MCF 10A (cell line): ENCODE measurements at regions of chr3 and their contacts with region 1.

Region 1: DNA sequence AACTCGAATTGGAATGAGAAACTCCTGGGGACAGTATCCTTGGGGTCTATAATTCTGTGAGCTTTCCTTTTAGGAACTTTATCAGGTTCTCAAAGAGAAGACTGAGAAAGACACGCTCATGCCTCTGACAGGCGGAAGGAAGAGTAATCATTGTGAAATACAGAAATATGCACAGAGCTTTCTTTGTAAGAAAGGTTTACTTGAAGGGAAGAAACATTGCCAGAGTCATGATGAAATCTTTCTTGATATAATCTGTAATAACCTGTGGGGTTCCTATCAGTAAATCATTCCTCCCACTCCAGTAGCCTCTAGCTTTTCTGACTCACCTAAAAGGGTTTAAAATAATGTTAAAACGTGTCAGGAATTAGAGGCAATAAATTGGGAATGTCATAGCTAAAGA is 83.6 kb upstream of the CCDC39 start:
- DNase-seq: peak; percentile 53
- H3K4me3 Mint-ChIP-seq: peak overlapping the region; percentile 60
- H3K27ac Mint-ChIP-seq: peak overlapping the region; percentile 65
- H3K4me1 Mint-ChIP-seq: peaks cover 16% of the 10 kb centered on the region
- H3K27me3 Mint-ChIP-seq: no peaks in the 10 kb centered on the region
- CTCF ChIP-seq: no peak

Region 2: GRCh38 chr3:180700941-180701340 is 61.9 kb before region 1 on chr3:
- CTCF ChIA-PET with region 1: interaction called, 9 read pairs
- POLR2A ChIA-PET with region 1: interaction called, 21 read pairs
- intact Hi-C with region 1: loop called (anchors 5 kb)
- DNase-seq: peak; percentile 61
- H3K4me3 Mint-ChIP-seq: peak overlapping the region; percentile 15
- H3K27ac Mint-ChIP-seq: peak overlapping the region; percentile 80
- H3K4me1 Mint-ChIP-seq: peaks cover 37% of the 10 kb centered on the region
- H3K27me3 Mint-ChIP-seq: no peaks in the 10 kb centered on the region
- CTCF ChIP-seq: no peak

Region 3: DNA sequence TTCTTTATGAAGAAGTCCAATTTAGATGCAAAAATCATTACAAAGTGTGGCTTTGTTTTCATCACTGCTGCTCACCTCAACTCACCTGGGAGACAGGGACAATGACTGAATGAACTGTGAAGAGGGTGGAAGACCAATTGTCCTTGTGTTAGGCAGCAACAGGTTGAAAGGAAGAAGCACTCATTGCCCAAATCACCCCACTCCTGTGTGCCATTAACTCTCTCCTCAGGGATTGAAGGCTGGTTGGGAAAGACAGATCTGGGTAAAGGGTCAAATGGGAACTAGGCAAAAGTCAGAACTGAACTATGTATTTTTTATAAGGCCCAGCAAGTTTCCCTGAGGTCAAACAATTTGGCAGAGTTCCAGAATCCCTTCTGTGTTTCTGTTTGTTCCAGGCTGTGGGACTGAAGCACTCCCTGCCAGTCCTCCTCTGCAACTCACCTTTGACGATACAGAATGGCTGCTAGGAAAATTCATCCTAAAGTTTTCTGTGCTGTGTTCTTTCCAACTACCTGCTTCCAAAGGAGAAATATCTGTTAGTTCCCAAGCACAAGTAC is 15.0 kb before region 1 on chr3:
- CTCF ChIA-PET with region 1: interaction called, 5 read pairs
- POLR2A ChIA-PET with region 1: interaction called, 10 read pairs
- intact Hi-C with region 1: no loop called
- DNase-seq: no peak
- H3K4me3 Mint-ChIP-seq: no peak overlapping the region
- H3K27ac Mint-ChIP-seq: no peak overlapping the region
- H3K4me1 Mint-ChIP-seq: peaks cover 8% of the 10 kb centered on the region
- H3K27me3 Mint-ChIP-seq: no peaks in the 10 kb centered on the region
- CTCF ChIP-seq: no peak

Region 4: GRCh38 chr3:180782195-180782984 is 19.5 kb after region 1 on chr3:
- CTCF ChIA-PET with region 1: interaction called, 36 read pairs
- POLR2A ChIA-PET with region 1: interaction called, 3 read pairs
- intact Hi-C with region 1: no loop called
- DNase-seq: peak; percentile 13
- H3K4me3 Mint-ChIP-seq: no peak overlapping the region
- H3K27ac Mint-ChIP-seq: no peak overlapping the region
- H3K4me1 Mint-ChIP-seq: no peaks in the 10 kb centered on the region
- H3K27me3 Mint-ChIP-seq: no peaks in the 10 kb centered on the region
- CTCF ChIP-seq: peak; percentile 40